Colonic mucosa (tissue), 4 donors: ENCODE measurements at regions of chr17 and their contacts with region 1.

Region 1: GRCh38 chr17:57480438-57481196 is 224.3 kb downstream of the MSI2 start:
- DNase-seq: no peak
- H3K4me3 ChIP-seq: no peak overlapping the region
- H3K27ac ChIP-seq: no peak overlapping the region
- H3K4me1 ChIP-seq: no peaks in the 10 kb centered on the region
- H3K27me3 ChIP-seq: no peaks in the 10 kb centered on the region
- CTCF ChIP-seq: no peak

Region 2: DNA sequence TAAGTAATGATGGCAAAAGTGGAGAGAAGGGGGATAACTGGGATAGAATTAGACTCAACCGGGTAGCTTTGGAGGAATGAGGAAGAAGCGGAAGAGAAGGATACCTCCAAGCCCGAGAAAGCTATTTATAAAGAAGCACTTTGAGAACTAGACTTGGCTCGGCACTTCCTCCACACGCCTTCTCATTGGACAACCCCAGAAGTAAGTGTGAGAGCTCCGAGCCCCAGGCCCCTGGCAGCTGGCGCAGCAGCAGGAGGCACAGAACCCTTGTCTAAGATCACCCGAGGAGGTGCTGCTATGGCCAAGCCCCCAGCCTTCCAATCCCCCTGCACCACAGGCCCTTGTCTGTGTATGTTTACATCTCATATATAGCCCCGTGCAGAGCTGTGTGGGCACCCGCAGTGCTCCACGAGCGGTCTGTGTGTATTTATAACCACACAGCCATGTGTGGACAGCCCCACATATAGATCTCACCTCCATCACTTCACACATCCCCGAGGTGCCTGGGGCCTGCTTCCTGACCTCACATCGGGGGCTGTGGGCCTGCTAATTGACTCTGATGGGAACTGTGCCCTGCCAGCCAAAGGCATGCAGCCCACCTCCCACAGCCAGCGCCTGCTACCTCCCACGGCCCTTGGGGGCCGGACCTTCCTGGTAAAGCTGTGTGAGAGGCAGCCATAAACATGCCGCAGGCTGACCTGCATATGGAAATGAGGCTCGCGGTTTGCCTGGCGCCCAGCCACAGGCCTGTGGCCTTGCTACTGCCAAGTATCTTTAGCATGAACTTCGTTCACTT is 743.1 kb before region 1 on chr17:
- intact Hi-C with region 1: no loop called
- DNase-seq: no peak
- H3K4me3 ChIP-seq: no peak overlapping the region
- H3K27ac ChIP-seq: no peak overlapping the region
- H3K4me1 ChIP-seq: no peaks in the 10 kb centered on the region
- H3K27me3 ChIP-seq: no peaks in the 10 kb centered on the region
- CTCF ChIP-seq: no peak

Region 3: DNA sequence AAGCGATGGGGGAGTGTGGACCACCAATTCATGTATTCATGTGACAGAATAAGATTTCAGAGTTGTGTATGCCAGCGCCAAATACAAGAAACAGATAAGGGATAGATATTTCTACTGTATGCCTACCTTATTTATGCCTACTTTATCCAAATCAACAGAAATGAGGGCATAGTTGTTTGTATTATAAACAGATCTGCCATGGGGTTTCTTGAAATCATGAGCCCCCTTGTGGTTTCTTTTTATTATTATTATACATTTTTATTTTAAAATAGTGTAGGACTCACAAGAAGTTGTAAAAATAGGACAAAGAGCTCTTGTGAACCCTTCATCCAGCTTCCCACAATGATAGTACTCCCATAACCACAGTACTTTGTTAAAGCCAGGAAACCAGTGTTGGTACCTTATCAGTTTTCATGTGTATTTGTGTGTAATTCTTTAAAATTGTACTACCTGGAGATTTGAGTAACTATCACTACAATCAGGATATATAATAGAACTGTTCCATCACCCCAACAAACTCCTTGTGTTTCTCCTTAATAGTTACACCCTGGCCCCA is 35.1 kb after region 1 on chr17:
- intact Hi-C with region 1: loop called (anchors 2 kb)
- DNase-seq: no peak
- H3K4me3 ChIP-seq: no peak overlapping the region
- H3K27ac ChIP-seq: no peak overlapping the region
- H3K4me1 ChIP-seq: no peaks in the 10 kb centered on the region
- H3K27me3 ChIP-seq: no peaks in the 10 kb centered on the region
- CTCF ChIP-seq: no peak

Region 4: DNA sequence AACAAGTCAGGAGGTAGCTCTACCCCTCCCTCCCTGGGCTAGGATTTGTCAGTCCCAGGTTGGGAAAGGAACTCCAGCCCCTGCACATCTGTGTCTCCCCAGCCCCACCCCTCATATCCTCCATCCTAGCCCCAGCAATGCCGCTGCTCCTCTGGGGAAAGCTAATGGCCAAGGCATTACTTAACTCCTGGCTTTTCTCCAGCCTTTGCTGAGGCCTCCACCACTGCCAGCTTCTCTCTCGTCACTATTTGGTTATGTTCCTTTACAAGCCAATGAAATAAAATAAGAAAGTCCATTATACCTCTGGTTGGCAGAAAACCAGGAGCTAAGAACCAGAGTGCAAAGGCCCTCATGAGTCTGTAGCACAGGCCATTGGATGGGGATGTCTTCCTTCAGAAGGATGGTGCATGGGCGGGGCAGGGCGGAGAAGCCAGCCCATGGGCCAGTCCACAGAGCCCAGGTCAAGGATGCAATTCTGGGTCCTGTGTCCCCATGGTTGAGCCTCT is 93.5 kb after region 1 on chr17:
- intact Hi-C with region 1: no loop called
- DNase-seq: peak; percentile 31
- H3K4me3 ChIP-seq: no peak overlapping the region
- H3K27ac ChIP-seq: no peak overlapping the region
- H3K4me1 ChIP-seq: no peaks in the 10 kb centered on the region
- H3K27me3 ChIP-seq: no peaks in the 10 kb centered on the region
- CTCF ChIP-seq: no peak